Breast epithelium (tissue), 4 donors: ENCODE measurements at regions of chr14 and their contacts with region 1.

Region 1: DNA sequence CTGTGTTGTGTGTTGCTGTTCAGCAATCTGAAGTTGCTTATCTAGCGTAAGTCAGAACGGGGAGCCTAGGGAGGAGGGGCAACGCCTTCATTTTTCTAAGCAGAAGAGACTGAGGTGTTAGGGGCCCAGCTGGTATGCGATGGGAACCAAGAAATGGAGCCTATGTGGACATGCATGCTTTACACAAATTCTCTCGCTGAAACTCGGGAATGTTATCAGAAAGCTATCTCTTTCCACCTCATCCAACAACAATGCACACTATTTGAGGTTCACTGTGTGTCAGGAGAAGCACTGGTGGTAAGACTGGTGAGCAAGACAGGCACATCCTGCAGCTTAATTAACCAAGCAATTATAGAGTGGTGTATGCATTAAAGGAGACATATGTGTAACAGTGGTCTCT is 89.7 kb downstream of the NRXN3 start:
- DNase-seq: no peak
- H3K4me3 ChIP-seq: no peak overlapping the region
- H3K27ac ChIP-seq: no peak overlapping the region
- H3K4me1 ChIP-seq: no peaks in the 10 kb centered on the region
- H3K27me3 ChIP-seq: no peaks in the 10 kb centered on the region
- CTCF ChIP-seq: no peak
- POLR2A ChIP-seq: no peak

Region 2: GRCh38 chr14:78282416-78282815 is 22.6 kb after region 1 on chr14:
- intact Hi-C with region 1: no loop called
- DNase-seq: no peak
- H3K4me3 ChIP-seq: no peak overlapping the region
- H3K27ac ChIP-seq: no peak overlapping the region
- H3K4me1 ChIP-seq: no peaks in the 10 kb centered on the region
- H3K27me3 ChIP-seq: no peaks in the 10 kb centered on the region
- CTCF ChIP-seq: no peak
- POLR2A ChIP-seq: no peak

Region 3: GRCh38 chr14:78666336-78667056 is 406.7 kb after region 1 on chr14:
- intact Hi-C with region 1: loop called (anchors 5 kb)
- DNase-seq: no peak
- H3K4me3 ChIP-seq: no peak overlapping the region
- H3K27ac ChIP-seq: no peak overlapping the region
- H3K4me1 ChIP-seq: no peaks in the 10 kb centered on the region
- H3K27me3 ChIP-seq: no peaks in the 10 kb centered on the region
- CTCF ChIP-seq: no peak
- POLR2A ChIP-seq: no peak